CD4-positive, alpha-beta T cell (primary cell): ENCODE measurements at regions of chr14 and their contacts with region 1.

Region 1: GRCh38 chr14:90969531-90970166 is 90.8 kb downstream of the RPS6KA5 start:
- DNase-seq: peak in 1 of 14 experiments; percentile 3
- ATAC-seq: no peak
- H3K4me3 ChIP-seq: no peak overlapping the region
- H3K4me3 Mint-ChIP-seq: peak overlapping the region; percentile 1
- H3K27ac ChIP-seq: no peak overlapping the region
- H3K27ac Mint-ChIP-seq: no peak overlapping the region
- H3K4me1 ChIP-seq: no peaks in the 10 kb centered on the region
- H3K4me1 Mint-ChIP-seq: peaks cover 16% of the 10 kb centered on the region
- H3K27me3 ChIP-seq: no peaks in the 10 kb centered on the region
- H3K27me3 Mint-ChIP-seq: no peaks in the 10 kb centered on the region
- CTCF ChIP-seq: no peak

Region 2: GRCh38 chr14:90522571-90523191 is 447.0 kb before region 1 on chr14:
- CTCF ChIA-PET with region 1: no interaction called
- POLR2A ChIA-PET with region 1: no interaction called
- intact Hi-C with region 1: no loop called
- DNase-seq: no peak
- ATAC-seq: no peak
- H3K4me3 ChIP-seq: no peak overlapping the region
- H3K4me3 Mint-ChIP-seq: no peak overlapping the region
- H3K27ac ChIP-seq: no peak overlapping the region
- H3K27ac Mint-ChIP-seq: no peak overlapping the region
- H3K4me1 ChIP-seq: peaks cover 5% of the 10 kb centered on the region
- H3K4me1 Mint-ChIP-seq: no peaks in the 10 kb centered on the region
- H3K27me3 ChIP-seq: peaks cover 0 to 3% of the 10 kb centered on the region in 2 experiments
- H3K27me3 Mint-ChIP-seq: no peaks in the 10 kb centered on the region
- CTCF ChIP-seq: no peak

Region 3: DNA sequence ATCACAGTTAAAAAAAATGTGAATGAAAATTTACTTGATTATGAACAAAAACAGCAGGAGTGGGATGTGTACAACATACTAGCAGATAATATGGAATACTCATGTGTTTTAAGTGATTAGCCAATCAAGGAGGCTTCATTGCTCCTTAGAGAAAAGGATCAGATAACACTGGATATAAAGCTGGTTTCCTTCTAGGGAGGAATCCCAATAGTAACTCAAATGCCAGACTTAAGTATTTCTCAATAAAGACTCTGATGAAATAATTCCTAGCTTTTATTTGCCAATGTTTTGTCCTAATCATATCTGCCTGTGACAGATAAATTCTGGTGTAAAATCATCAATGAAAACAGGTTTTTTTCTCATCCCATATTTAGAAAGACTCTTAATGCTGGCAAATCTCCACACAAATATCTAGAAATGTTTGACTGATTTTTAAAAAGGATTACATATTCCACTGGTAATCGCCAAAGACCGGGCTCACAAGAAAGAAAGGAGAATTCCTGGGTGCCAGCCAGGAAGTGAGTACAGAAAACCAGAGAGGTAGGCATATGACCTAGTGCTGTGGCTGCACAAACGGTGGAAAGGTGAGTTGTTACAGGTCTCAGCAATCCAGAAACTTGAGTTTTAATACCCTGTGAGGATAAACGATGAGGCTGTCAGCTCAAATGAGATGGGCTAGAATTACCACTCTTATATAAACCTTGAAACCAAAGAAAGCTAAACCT is 44.9 kb before region 1 on chr14:
- CTCF ChIA-PET with region 1: no interaction called
- POLR2A ChIA-PET with region 1: no interaction called
- intact Hi-C with region 1: loop called in 1 of 2 experiments (anchors 5 kb)
- DNase-seq: no peak
- ATAC-seq: no peak
- H3K4me3 ChIP-seq: no peak overlapping the region
- H3K4me3 Mint-ChIP-seq: no peak overlapping the region
- H3K27ac ChIP-seq: no peak overlapping the region
- H3K27ac Mint-ChIP-seq: no peak overlapping the region
- H3K4me1 ChIP-seq: no peaks in the 10 kb centered on the region
- H3K4me1 Mint-ChIP-seq: no peaks in the 10 kb centered on the region
- H3K27me3 ChIP-seq: no peaks in the 10 kb centered on the region
- H3K27me3 Mint-ChIP-seq: no peaks in the 10 kb centered on the region
- CTCF ChIP-seq: no peak

Region 4: DNA sequence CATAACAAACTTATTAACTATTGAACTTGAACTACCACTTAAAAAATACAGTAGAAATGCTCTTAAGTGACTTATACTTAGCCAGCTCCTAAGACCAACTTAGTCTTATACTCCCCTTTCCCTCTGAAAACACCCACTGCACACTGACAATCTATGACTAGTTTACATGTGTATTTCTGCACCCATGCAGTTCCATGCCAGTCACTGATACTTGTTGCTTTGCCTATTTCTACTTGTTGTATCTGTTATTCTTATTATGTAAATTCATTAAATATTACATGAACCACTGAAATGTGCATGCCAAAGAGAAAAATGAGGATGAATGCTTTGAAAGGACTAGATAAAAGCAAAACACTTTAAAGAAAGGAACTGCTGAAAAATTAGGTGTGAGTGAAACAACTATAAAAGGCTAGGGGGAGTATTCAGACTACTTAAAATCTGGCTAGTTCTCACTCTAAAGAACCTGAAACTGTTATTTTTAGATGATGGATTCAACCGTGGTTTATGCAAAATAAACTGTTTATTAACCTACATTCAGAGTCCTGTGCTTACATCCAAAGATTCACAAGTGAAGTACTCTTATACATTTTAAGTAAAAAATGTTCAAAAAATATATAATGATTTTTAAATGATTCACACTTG is 16.1 kb after region 1 on chr14:
- CTCF ChIA-PET with region 1: no interaction called
- POLR2A ChIA-PET with region 1: no interaction called
- intact Hi-C with region 1: no loop called
- DNase-seq: peak in 1 of 14 experiments; percentile 4
- ATAC-seq: no peak
- H3K4me3 ChIP-seq: no peak overlapping the region
- H3K4me3 Mint-ChIP-seq: no peak overlapping the region
- H3K27ac ChIP-seq: no peak overlapping the region
- H3K27ac Mint-ChIP-seq: no peak overlapping the region
- H3K4me1 ChIP-seq: no peaks in the 10 kb centered on the region
- H3K4me1 Mint-ChIP-seq: peaks cover 3% of the 10 kb centered on the region
- H3K27me3 ChIP-seq: no peaks in the 10 kb centered on the region
- H3K27me3 Mint-ChIP-seq: no peaks in the 10 kb centered on the region
- CTCF ChIP-seq: no peak

Region 5: DNA sequence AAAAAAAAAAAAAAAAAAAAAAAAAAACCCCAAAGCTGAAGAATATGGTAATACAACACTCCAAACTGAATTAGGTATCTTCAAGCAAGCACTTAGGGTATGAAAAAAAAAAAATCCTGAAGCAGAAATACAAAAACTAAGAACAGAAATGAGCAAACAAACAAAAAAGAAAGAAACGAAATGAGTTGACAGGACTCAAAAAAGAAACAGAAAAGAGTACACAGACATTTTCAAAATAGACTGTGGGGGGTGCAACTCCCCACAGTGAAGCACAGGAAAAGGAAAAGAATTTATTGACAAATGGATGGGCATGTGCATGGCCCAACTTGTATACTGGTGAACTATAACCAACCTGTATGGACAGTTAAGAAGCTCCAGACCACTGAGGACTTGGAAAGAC is 66.2 kb after region 1 on chr14:
- CTCF ChIA-PET with region 1: no interaction called
- POLR2A ChIA-PET with region 1: no interaction called
- intact Hi-C with region 1: loop called in 1 of 2 experiments (anchors 2 kb)
- DNase-seq: peak in 1 of 14 experiments; percentile 9
- ATAC-seq: no peak
- H3K4me3 ChIP-seq: no peak overlapping the region
- H3K4me3 Mint-ChIP-seq: no peak overlapping the region
- H3K27ac ChIP-seq: no peak overlapping the region
- H3K27ac Mint-ChIP-seq: no peak overlapping the region
- H3K4me1 ChIP-seq: peaks cover 9% of the 10 kb centered on the region
- H3K4me1 Mint-ChIP-seq: peaks cover 69% of the 10 kb centered on the region
- H3K27me3 ChIP-seq: no peaks in the 10 kb centered on the region
- H3K27me3 Mint-ChIP-seq: no peaks in the 10 kb centered on the region
- CTCF ChIP-seq: no peak